Activated CD8-positive, alpha-beta T cell treated with anti-CD3 and anti-CD28 coated beads for 36 hours (primary cell): ENCODE measurements at regions of chr2 and their contacts with region 1.

Region 1: GRCh38 chr2:70142590-70143313 is 48.1 kb downstream of the C2orf42 start:
- DNase-seq: peak; percentile 100
- ATAC-seq: peak; percentile 71
- H3K4me3 Mint-ChIP-seq: peak overlapping the region; percentile 86
- H3K27ac Mint-ChIP-seq: peak overlapping the region; percentile 100
- H3K4me1 Mint-ChIP-seq: peaks cover 65% of the 10 kb centered on the region
- H3K27me3 Mint-ChIP-seq: no peaks in the 10 kb centered on the region
- CTCF ChIP-seq: peak; percentile 87

Region 2: DNA sequence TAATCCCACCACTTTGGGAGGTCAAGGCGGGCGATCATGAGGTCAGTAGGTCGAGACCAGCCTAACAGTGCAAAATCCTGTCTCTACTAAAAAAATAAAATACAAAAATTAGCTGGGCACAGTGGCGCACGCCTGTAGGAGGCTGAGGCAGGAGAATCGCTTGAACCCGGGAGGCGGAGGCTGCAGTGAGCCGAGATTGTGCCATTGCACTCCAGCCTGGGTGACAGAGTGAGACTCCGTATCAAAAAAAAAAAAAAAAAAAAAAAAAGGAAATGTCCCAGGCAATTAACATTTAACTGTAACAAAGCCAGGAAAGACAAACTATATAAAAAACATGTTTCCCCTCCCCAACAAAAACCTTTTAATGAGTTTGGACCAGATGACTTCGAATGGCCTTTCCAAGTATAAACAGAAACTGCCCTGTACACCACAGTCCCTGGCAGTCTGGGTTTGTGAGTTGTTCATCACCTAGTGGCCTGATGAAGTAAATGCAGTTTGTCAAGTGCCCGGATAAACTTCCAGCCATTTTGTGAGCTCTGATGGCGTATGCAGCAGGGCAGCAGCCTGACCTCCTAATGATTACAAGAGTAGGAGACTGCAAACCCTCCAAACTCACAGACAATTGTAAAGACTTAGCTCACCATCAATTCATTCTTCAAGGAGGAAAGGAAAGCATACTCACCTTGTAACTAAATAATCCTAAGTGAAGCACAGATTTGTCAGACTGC is 72.0 kb before region 1 on chr2:
- CTCF ChIA-PET with region 1: interaction called, 11 read pairs
- POLR2A ChIA-PET with region 1: interaction called, 955 read pairs
- intact Hi-C with region 1: no loop called
- DNase-seq: peak; percentile 74
- ATAC-seq: peak; percentile 72
- H3K4me3 Mint-ChIP-seq: peak overlapping the region; percentile 40
- H3K27ac Mint-ChIP-seq: peak overlapping the region; percentile 87
- H3K4me1 Mint-ChIP-seq: peaks cover 44% of the 10 kb centered on the region
- H3K27me3 Mint-ChIP-seq: no peaks in the 10 kb centered on the region
- CTCF ChIP-seq: peak; percentile 67

Region 3: GRCh38 chr2:70104231-70105111 is 38.3 kb before region 1 on chr2:
- CTCF ChIA-PET with region 1: interaction called, 4 read pairs
- POLR2A ChIA-PET with region 1: interaction called, 21 read pairs
- intact Hi-C with region 1: no loop called
- DNase-seq: peak; percentile 79
- ATAC-seq: no peak
- H3K4me3 Mint-ChIP-seq: peak overlapping the region; percentile 77
- H3K27ac Mint-ChIP-seq: peak overlapping the region; percentile 95
- H3K4me1 Mint-ChIP-seq: peaks cover 58% of the 10 kb centered on the region
- H3K27me3 Mint-ChIP-seq: no peaks in the 10 kb centered on the region
- CTCF ChIP-seq: no peak

Region 4: DNA sequence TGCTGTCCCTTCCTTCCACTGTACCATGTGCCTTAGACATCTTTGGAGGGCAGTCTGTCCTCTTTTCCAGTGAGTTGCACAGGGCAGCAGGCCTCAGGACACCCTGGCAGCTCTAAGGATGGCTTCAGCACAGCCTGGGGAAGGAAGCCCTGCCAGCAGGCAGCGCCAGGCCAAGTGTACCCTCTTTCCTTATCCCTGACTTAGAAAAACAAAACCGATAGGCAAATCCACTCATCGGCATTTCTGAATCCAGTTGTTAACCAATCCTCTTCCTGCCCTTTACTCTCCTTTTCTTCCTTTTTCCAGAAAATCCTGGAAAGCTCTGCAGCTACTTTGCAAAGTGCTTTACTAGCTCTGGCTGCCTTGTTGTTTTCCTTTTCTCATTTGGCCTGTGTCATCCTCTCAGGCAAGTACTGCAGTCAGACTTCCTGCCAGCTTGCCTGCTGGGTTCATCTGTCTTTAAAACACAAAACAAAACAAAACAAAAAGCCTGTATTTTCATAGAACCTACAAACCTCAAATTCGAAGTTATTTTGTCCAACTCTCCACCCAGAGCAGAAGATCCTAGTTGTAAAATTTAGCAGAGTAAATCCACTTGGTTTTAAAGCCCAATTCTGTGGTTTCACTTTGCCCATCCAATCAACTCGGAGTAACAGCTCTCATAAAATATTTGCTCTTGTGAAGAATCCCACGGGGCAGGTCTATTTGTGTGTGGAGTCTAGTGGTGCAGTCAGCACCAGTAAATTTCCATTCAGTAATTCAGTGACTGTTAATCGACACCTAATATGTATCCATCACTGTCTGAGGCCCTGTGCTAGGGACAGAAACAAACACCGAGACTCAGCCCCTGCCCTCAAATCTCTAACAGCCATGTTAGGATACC is 10.3 kb before region 1 on chr2:
- CTCF ChIA-PET with region 1: interaction called, 16 read pairs
- POLR2A ChIA-PET with region 1: interaction called, 32 read pairs
- intact Hi-C with region 1: no loop called
- DNase-seq: peak; percentile 65
- ATAC-seq: peak; percentile 46
- H3K4me3 Mint-ChIP-seq: peak overlapping the region; percentile 86
- H3K27ac Mint-ChIP-seq: peak overlapping the region; percentile 99
- H3K4me1 Mint-ChIP-seq: peaks cover 61% of the 10 kb centered on the region
- H3K27me3 Mint-ChIP-seq: no peaks in the 10 kb centered on the region
- CTCF ChIP-seq: no peak

Region 5: GRCh38 chr2:70201831-70202806 is 59.4 kb after region 1 on chr2:
- CTCF ChIA-PET with region 1: no interaction called
- POLR2A ChIA-PET with region 1: no interaction called
- intact Hi-C with region 1: no loop called
- DNase-seq: no peak
- ATAC-seq: no peak
- H3K4me3 Mint-ChIP-seq: no peak overlapping the region
- H3K27ac Mint-ChIP-seq: no peak overlapping the region
- H3K4me1 Mint-ChIP-seq: no peaks in the 10 kb centered on the region
- H3K27me3 Mint-ChIP-seq: no peaks in the 10 kb centered on the region
- CTCF ChIP-seq: no peak

Region 6: GRCh38 chr2:70270323-70270722 is 127.6 kb after region 1 on chr2:
- CTCF ChIA-PET with region 1: no interaction called
- POLR2A ChIA-PET with region 1: no interaction called
- intact Hi-C with region 1: no loop called
- DNase-seq: no peak
- ATAC-seq: no peak
- H3K4me3 Mint-ChIP-seq: no peak overlapping the region
- H3K27ac Mint-ChIP-seq: no peak overlapping the region
- H3K4me1 Mint-ChIP-seq: peaks cover 10% of the 10 kb centered on the region
- H3K27me3 Mint-ChIP-seq: no peaks in the 10 kb centered on the region
- CTCF ChIP-seq: no peak